ENCODE measurements at regions of chr2 and their contacts with region 1.

Region 1: GRCh38 chr2:196291873-196292800 is 120.8 kb upstream of the STK17B start:
- DNase-seq: peak in 2 of 9 experiments; percentile 31 to 56
- ATAC-seq: no peak
- H3K4me3 ChIP-seq: no peak overlapping the region
- H3K4me3 Mint-ChIP-seq: no peak overlapping the region
- H3K27ac ChIP-seq: peak overlapping the region in 1 of 2 experiments; percentile 17
- H3K27ac Mint-ChIP-seq: no peak overlapping the region
- H3K4me1 ChIP-seq: peaks cover 15% of the 10 kb centered on the region
- H3K4me1 Mint-ChIP-seq: peaks cover 28% of the 10 kb centered on the region
- H3K27me3 ChIP-seq: no peaks in the 10 kb centered on the region
- H3K27me3 Mint-ChIP-seq: no peaks in the 10 kb centered on the region
- CTCF ChIP-seq: no peak

Region 2: DNA sequence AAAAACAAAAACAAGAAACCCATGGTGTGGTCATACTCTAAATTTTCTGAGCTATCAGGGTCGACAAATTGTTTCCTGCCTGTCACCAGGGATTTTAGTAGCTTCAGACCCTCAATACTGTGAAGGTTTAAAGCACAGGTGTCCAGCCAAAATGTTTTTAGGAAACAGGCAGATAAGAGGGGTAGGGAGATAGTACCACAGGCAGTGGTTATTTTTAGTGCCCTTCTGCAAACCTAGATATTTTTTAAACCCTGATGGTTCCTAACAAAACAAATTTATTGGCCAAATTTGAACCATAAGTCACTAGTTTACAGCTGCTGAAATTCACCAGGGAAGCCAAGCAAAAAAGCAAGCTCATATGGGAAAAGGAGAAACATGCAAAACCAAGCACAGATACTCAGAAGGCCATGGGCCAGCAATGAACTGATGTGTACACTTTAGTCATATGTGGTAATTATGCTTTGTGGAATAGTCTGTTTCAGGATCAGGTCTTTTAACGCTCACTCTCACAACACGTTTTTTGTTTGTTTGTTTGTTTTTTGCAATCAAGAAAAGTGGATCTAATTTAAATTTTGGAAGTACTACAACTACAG is 36.0 kb after region 1 on chr2:
- CTCF ChIA-PET with region 1: no interaction called
- POLR2A ChIA-PET with region 1: no interaction called
- intact Hi-C with region 1: loop called in 1 of 2 experiments (anchors 5 kb)
- DNase-seq: no peak
- ATAC-seq: no peak
- H3K4me3 ChIP-seq: no peak overlapping the region
- H3K4me3 Mint-ChIP-seq: no peak overlapping the region
- H3K27ac ChIP-seq: no peak overlapping the region
- H3K27ac Mint-ChIP-seq: no peak overlapping the region
- H3K4me1 ChIP-seq: no peaks in the 10 kb centered on the region
- H3K4me1 Mint-ChIP-seq: no peaks in the 10 kb centered on the region
- H3K27me3 ChIP-seq: no peaks in the 10 kb centered on the region
- H3K27me3 Mint-ChIP-seq: peaks cover 4% of the 10 kb centered on the region
- CTCF ChIP-seq: no peak

Region 3: GRCh38 chr2:196453613-196454047 is 161.5 kb after region 1 on chr2:
- CTCF ChIA-PET with region 1: interaction called, 6 read pairs
- POLR2A ChIA-PET with region 1: no interaction called
- intact Hi-C with region 1: loop called in 1 of 2 experiments (anchors 10 kb)
- DNase-seq: peak in 6 of 9 experiments; percentile 3 to 64 (median 31)
- ATAC-seq: no peak
- H3K4me3 ChIP-seq: no peak overlapping the region
- H3K4me3 Mint-ChIP-seq: no peak overlapping the region
- H3K27ac ChIP-seq: no peak overlapping the region
- H3K27ac Mint-ChIP-seq: no peak overlapping the region
- H3K4me1 ChIP-seq: no peaks in the 10 kb centered on the region
- H3K4me1 Mint-ChIP-seq: peaks cover 2% of the 10 kb centered on the region
- H3K27me3 ChIP-seq: peaks cover 0 to 7% of the 10 kb centered on the region in 2 experiments
- H3K27me3 Mint-ChIP-seq: peaks cover 21% of the 10 kb centered on the region
- CTCF ChIP-seq: no peak